ENCODE measurements at regions of chr16 and their contacts with region 1.

Region 1: DNA sequence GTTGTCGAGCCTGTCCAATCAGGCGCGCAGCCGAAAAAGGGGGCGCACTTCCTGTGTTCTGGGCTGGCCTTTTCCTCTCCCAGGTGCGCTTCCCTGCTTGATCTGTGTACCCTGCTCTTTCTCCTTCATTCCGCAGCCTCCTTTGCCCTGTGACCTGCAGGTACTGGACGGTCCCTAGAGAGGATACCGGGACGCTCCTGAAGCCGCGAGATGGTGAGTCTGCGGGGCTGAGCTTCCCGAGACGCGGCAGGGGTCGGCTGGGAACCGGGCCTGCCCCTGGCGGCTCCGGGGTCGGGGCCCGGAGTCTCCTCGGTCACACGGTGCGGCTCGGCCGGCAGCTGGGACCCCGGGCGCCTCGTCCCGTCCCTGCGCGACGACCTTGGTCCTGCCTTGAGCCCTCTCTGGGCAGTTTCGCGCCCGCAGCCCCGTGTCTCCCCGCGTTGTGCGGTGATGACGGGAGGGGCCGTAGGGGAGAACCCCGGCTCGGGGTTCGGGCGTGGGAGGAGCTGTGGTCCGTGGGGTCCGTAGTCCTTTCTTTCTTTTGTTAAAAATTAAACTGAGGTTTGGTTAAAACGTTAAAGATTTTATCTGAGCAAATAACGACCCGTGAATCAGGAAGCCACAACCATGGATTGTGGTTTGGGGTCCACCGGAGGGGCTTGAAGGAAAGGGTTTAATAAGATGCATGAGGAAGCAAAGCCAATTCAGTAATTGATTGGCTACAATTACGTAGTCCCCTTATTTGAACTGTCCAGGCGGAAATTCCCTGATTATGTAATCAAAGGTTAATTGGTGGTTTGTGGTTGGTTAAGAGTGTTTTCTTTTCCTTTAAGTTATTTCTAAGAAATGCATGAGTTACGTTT is 172.8 kb upstream of the ZNF267 start:
- DNase-seq: peak; percentile 67 to 93 (median 80)
- ATAC-seq: peak; percentile 72
- H3K4me3 ChIP-seq: peak overlapping the region; percentile 89
- H3K4me3 Mint-ChIP-seq: peak overlapping the region; percentile 96
- H3K27ac ChIP-seq: peak overlapping the region; percentile 88 to 92
- H3K27ac Mint-ChIP-seq: peak overlapping the region; percentile 99
- H3K4me1 ChIP-seq: peaks cover 45% of the 10 kb centered on the region
- H3K4me1 Mint-ChIP-seq: peaks cover 37% of the 10 kb centered on the region
- H3K27me3 ChIP-seq: no peaks in the 10 kb centered on the region
- H3K27me3 Mint-ChIP-seq: no peaks in the 10 kb centered on the region
- CTCF ChIP-seq: no peak

Region 2: DNA sequence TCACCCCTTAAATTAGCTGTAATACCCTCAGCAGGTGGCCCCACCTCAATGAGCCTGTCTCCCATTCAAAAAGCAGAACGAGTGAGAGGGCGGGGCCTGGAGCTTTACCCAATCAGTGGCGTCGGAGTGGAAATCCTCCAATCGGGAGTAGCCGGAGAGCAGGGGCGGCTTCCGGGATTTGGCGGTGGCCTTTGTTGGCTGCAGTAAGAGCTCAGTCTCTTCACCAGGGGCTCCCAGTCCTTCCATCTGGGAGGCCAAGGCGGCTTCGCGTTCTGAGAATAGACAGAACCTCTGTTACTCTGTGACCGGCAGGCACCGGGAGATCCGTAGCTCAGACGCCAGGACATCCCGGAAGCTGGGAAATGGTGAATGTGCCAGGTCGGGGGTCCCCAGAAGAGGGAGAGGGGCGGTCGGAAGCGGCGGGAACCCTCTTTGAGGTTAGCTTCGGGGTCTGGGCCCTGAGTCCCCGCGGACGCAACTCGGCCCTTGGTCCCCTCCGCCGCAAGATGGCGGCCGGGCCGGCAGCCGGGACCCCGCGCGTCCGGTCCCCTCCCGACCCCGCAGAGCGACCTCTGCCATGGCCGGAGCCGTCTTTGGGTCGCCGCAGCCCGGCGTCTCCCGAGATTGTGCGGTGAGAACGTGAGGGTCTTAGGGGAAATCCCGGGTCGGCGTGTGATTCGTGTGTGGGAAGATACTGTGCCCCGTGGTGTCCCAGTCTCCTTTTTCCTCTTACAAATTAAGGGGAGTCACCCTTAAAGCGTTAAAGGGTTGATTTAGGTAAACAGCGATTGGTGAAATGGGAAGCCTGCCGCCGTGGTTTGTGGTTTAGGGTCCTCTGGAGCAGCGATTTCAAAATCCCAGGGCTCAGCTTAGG is 12.6 kb after region 1 on chr16:
- CTCF ChIA-PET with region 1: interaction called, 4 read pairs
- POLR2A ChIA-PET with region 1: interaction called, 75 read pairs
- intact Hi-C with region 1: loop called in 1 of 2 experiments (anchors 1 kb)
- DNase-seq: peak; percentile 81 to 94 (median 88)
- ATAC-seq: peak; percentile 82
- H3K4me3 ChIP-seq: peak overlapping the region; percentile 93
- H3K4me3 Mint-ChIP-seq: peak overlapping the region; percentile 100
- H3K27ac ChIP-seq: peak overlapping the region; percentile 83 to 87
- H3K27ac Mint-ChIP-seq: peak overlapping the region; percentile 96
- H3K4me1 ChIP-seq: peaks cover 33% of the 10 kb centered on the region
- H3K4me1 Mint-ChIP-seq: peaks cover 80% of the 10 kb centered on the region
- H3K27me3 ChIP-seq: no peaks in the 10 kb centered on the region
- H3K27me3 Mint-ChIP-seq: no peaks in the 10 kb centered on the region
- CTCF ChIP-seq: no peak

Region 3: GRCh38 chr16:31734265-31734664 is 33.5 kb after region 1 on chr16:
- CTCF ChIA-PET with region 1: no interaction called
- POLR2A ChIA-PET with region 1: no interaction called
- intact Hi-C with region 1: loop called in 1 of 2 experiments (anchors 2 kb)
- DNase-seq: no peak
- ATAC-seq: no peak
- H3K4me3 ChIP-seq: no peak overlapping the region
- H3K4me3 Mint-ChIP-seq: no peak overlapping the region
- H3K27ac ChIP-seq: no peak overlapping the region
- H3K27ac Mint-ChIP-seq: no peak overlapping the region
- H3K4me1 ChIP-seq: no peaks in the 10 kb centered on the region
- H3K4me1 Mint-ChIP-seq: peaks cover 5% of the 10 kb centered on the region
- H3K27me3 ChIP-seq: no peaks in the 10 kb centered on the region
- H3K27me3 Mint-ChIP-seq: no peaks in the 10 kb centered on the region
- CTCF ChIP-seq: no peak

Region 4: GRCh38 chr16:31861455-31861854 is 160.7 kb after region 1 on chr16:
- CTCF ChIA-PET with region 1: interaction called, 3 read pairs
- POLR2A ChIA-PET with region 1: no interaction called
- intact Hi-C with region 1: loop called in 1 of 2 experiments (anchors 5 kb)
- DNase-seq: peak in 4 of 14 experiments; percentile 35 to 69 (median 48)
- ATAC-seq: peak; percentile 84
- H3K4me3 ChIP-seq: no peak overlapping the region
- H3K4me3 Mint-ChIP-seq: peak overlapping the region; percentile 8
- H3K27ac ChIP-seq: peak overlapping the region in 1 of 2 donors; percentile 46
- H3K27ac Mint-ChIP-seq: peak overlapping the region; percentile 72
- H3K4me1 ChIP-seq: peaks cover 18% of the 10 kb centered on the region
- H3K4me1 Mint-ChIP-seq: peaks cover 26% of the 10 kb centered on the region
- H3K27me3 ChIP-seq: no peaks in the 10 kb centered on the region
- H3K27me3 Mint-ChIP-seq: no peaks in the 10 kb centered on the region
- CTCF ChIP-seq: no peak